Activated CD4-positive, alpha-beta T cell treated with anti-CD3 and anti-CD28 coated beads, Interleukin-2, amount 10 ng/mL, durations not matched to agents 24 days and 14 days (primary cell): ENCODE measurements at regions of chr1 and their contacts with region 1.

Region 1: GRCh38 chr1:247906504-247907047 is 11.2 kb downstream of the OR2W3 start:
- DNase-seq: peak; percentile 58
- H3K4me3 Mint-ChIP-seq: peak overlapping the region; percentile 80
- H3K27ac Mint-ChIP-seq: peak overlapping the region; percentile 90
- H3K4me1 Mint-ChIP-seq: peaks cover 23% of the 10 kb centered on the region
- H3K27me3 Mint-ChIP-seq: peaks cover 5% of the 10 kb centered on the region

Region 2: DNA sequence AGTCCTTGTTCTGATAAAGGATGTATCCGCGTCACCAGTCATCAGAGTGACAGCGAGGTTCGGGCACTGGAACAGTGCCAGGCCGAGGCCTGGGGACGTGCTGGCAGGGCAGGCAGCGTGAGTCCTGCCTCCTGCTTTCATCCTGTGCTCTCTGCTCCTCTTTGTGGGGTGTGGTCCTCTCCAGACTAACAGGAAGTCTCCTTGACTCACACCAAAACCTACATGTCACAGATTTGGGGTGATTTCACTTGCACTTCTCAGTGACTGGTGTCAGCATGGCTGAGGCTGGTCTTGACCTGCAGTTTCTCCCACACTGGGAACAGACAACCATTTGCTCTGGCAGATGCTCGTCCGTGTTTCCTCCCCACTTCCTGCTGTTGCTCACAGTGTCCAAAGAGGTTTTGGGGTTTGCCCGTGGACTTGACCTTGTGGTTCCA is 499.4 kb before region 1 on chr1:
- intact Hi-C with region 1: loop called (anchors 10 kb)
- DNase-seq: peak; percentile 86
- H3K4me3 Mint-ChIP-seq: peak overlapping the region; percentile 57
- H3K27ac Mint-ChIP-seq: peak overlapping the region; percentile 49
- H3K4me1 Mint-ChIP-seq: peaks cover 31% of the 10 kb centered on the region
- H3K27me3 Mint-ChIP-seq: peaks cover 22% of the 10 kb centered on the region

Region 3: DNA sequence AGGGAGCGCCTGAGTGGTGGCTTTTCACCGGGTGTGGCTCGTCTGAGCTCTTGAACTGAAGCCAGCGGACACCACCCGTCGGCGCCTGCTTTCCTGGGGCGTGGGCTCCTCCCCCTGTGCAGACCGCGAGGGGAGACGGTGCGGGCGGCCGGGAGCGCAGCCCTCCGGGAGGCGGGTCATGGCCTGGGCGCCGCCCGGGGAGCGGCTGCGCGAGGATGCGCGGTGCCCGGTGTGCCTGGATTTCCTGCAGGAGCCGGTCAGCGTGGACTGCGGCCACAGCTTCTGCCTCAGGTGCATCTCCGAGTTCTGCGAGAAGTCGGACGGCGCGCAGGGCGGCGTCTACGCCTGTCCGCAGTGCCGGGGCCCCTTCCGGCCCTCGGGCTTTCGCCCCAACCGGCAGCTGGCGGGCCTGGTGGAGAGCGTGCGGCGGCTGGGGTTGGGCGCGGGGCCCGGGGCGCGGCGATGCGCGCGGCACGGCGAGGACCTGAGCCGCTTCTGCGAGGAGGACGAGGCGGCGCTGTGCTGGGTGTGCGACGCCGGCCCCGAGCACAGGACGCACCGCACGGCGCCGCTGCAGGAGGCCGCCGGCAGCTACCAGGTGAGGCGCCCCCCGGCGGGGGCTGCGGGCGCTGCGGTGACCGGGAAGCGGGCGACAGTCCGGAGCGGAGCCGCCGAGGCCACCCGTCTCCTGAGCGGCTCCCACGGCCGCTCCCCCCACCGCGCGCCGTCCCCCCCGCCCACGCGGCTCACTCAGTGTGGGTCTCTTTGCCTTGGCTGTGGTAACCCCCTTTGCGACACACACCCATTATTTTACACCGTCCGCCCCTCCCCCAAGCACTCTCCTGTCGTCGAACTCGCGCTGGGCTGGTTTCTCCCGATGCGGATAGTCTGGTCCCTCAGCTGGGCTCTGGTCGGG is 49.2 kb before region 1 on chr1 and contains the start of gene TRIM58:
- intact Hi-C with region 1: loop called (anchors 5 kb)
- DNase-seq: peak; percentile 78
- H3K4me3 Mint-ChIP-seq: peak within 1 kb of the TSS; percentile 79
- H3K27ac Mint-ChIP-seq: peak within 1 kb of the TSS; percentile 47
- H3K4me1 Mint-ChIP-seq: peaks cover 10% of the 10 kb centered on the region
- H3K27me3 Mint-ChIP-seq: peaks cover 38% of the 10 kb centered on the region
- total RNA-seq, gene TRIM58: 0.23 and 0.24 TPM in 2 replicates

Region 4: GRCh38 chr1:248013229-248013710 is 106.7 kb after region 1 on chr1 and contains the start of gene OR2L5:
- intact Hi-C with region 1: no loop called
- DNase-seq: no peak
- H3K4me3 Mint-ChIP-seq: no peak within 1 kb of the TSS
- H3K27ac Mint-ChIP-seq: no peak within 1 kb of the TSS
- H3K4me1 Mint-ChIP-seq: no peaks in the 10 kb centered on the region
- H3K27me3 Mint-ChIP-seq: no peaks in the 10 kb centered on the region
- total RNA-seq, gene OR2L5: not detected in 2 replicates